A549 (cell line): ENCODE measurements at regions of chr9 and their contacts with region 1.

Region 1: DNA sequence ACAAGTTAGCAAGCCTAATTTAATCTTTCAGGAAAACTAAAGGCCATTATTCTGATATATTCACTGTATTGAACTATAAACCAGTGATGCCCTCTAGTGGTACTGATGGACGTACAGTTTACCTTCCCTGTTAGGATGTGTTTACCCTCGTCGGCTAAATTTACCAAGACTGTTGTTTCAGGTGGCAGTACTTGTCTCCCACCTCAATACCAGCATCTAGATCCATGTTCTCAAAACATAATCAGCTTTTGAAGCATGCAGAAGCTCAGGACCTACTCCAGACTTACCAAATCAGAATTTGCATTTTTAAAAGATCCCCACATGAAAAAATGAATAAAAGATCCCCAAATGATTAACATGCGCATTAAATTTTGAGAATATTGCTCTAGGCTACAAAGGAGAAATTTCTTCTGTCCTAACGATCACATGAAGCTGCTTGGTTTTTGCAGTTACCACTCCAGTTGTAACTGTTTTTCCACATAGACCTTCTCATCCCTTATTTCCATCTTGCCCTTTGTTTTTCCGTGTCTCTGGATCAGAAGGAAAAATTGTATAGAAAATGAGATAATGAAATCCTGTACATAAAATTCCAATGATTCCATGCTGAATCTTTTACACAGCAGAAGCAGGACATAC is 3.2 kb upstream of the BAAT start:
- DNase-seq: peak in 1 of 2 experiments; percentile 82
- ATAC-seq: peak; percentile 98 to 99
- H3K4me3 ChIP-seq: no peak overlapping the region
- H3K27ac ChIP-seq: peak overlapping the region; percentile 68 to 82
- H3K4me1 ChIP-seq: peaks cover 44% of the 10 kb centered on the region
- CTCF ChIP-seq: peak; percentile 74
- EP300 ChIP-seq: no peak
- POLR2A ChIP-seq: no peak
- RAD21 ChIP-seq: peak; percentile 84

Region 2: DNA sequence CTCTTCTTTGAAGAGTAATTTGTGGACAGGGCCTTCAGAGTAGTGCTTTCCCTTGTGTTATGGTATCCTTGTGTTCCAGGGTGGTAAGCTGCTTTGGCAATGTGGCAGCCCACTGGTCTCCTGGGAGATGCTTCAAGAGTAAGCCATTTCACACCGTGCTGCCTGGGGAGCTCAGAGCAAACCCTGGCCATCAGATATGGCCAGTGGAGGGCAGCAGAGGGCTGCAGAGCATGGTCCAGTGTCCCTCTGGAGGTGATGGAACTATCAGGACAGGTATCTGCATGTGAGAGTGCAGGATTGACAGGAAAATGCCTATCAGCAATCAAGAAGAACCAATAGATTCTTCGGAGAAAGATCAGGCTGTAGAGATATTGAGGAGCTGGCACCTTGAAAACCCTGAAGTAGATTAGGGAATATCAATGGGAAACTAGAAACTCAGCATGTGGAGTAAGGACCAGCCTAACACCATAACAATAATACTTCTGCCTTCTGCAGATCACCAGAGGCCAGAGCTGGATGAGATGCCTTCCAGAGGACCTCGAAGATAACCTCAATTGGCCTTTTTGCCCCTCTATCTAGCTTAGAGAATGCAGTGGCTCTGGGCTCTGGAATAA is 268.7 kb before region 1 on chr9:
- CTCF ChIA-PET with region 1: interaction called, 14 read pairs
- POLR2A ChIA-PET with region 1: no interaction called
- DNase-seq: peak; percentile 33 to 58
- ATAC-seq: peak; percentile 99 to 100
- H3K4me3 ChIP-seq: no peak overlapping the region
- H3K27ac ChIP-seq: no peak overlapping the region
- H3K4me1 ChIP-seq: no peaks in the 10 kb centered on the region
- CTCF ChIP-seq: peak; percentile 81
- EP300 ChIP-seq: no peak
- POLR2A ChIP-seq: no peak
- RAD21 ChIP-seq: peak; percentile 87 to 88

Region 3: DNA sequence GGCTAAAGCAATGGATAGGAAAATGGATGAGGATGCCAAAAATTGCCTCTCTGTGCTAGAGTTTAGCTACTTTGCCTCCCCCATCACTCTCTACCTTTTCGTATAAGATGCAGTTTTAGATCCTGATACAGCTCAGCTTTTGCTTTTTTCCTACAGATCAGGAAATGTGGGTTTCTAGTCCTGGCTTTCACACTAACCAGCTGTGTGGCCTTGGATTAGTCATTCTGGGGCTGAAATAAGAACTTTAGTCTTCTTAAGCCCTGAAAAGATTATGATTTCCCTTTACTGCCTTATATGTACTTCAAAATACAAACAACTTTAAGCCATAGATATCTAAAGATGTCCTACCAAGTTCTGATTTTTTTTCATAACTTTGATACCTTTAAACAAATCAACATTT is 119.6 kb before region 1 on chr9:
- CTCF ChIA-PET with region 1: no interaction called
- POLR2A ChIA-PET with region 1: no interaction called
- DNase-seq: no peak
- ATAC-seq: no peak
- H3K4me3 ChIP-seq: no peak overlapping the region
- H3K27ac ChIP-seq: no peak overlapping the region
- H3K4me1 ChIP-seq: 0 out of 3 replicates have a peak, but pooled peaks cover 5% of the 10 kb centered on the region
- CTCF ChIP-seq: no peak
- EP300 ChIP-seq: no peak
- POLR2A ChIP-seq: no peak
- RAD21 ChIP-seq: no peak

Region 4: DNA sequence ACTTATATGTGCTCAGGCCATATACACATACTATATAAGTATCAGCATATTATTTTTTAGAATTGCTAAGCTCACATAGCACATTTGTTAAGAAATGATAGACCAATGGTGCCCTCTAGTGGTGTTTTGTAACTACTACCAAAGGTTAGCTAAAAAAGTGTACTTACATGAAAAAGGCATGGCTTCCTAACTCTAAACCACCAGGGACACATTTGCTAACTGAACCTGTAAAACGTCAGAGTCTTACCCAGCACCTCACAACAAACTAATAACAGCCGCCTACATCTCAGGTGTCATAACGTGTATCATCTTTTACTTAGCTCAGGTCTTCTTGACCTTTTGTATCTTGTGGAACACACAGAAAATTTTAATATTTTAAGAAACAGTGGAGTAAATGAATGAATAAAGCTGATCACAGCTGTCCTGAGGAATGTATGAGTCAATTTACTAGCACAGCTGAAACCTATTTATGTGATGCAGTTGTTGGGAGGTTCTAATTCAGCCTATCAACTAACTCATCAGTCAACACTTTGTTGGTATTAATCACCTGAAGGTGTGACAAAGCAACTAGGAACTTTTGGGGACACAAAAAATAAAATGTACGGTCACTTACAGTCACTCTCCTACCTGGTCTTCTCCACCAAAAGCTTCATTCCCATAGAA is 76.1 kb before region 1 on chr9:
- CTCF ChIA-PET with region 1: interaction called, 43 read pairs
- POLR2A ChIA-PET with region 1: no interaction called
- DNase-seq: peak; percentile 55 to 89
- ATAC-seq: peak; percentile 72 to 83; a peak in 4 of 6 replicates
- H3K4me3 ChIP-seq: no peak overlapping the region
- H3K27ac ChIP-seq: peak overlapping the region; percentile 78 to 82
- H3K4me1 ChIP-seq: peaks cover 40% of the 10 kb centered on the region
- CTCF ChIP-seq: peak; percentile 82
- EP300 ChIP-seq: no peak
- POLR2A ChIP-seq: no peak
- RAD21 ChIP-seq: peak; percentile 84 to 90

Region 5: GRCh38 chr9:101326501-101326900 is 61.5 kb before region 1 on chr9:
- CTCF ChIA-PET with region 1: interaction called, 30 read pairs
- POLR2A ChIA-PET with region 1: no interaction called
- DNase-seq: peak in 1 of 2 experiments; percentile 73
- ATAC-seq: peak; percentile 59 to 63; a peak in 5 of 6 replicates
- H3K4me3 ChIP-seq: 0 out of 3 replicates have a peak overlapping the region, but pooled peaks have one; percentile 5
- H3K27ac ChIP-seq: peak overlapping the region; percentile 92
- H3K4me1 ChIP-seq: peaks cover 51% of the 10 kb centered on the region
- CTCF ChIP-seq: no peak
- EP300 ChIP-seq: peak; percentile 85; a peak in 4 of 5 replicates
- POLR2A ChIP-seq: no peak
- RAD21 ChIP-seq: peak in 1 of 2 experiments; percentile 49; a peak in 2 of 5 replicates

Region 6: GRCh38 chr9:101369286-101369685 is 18.7 kb before region 1 on chr9:
- CTCF ChIA-PET with region 1: interaction called, 30 read pairs
- POLR2A ChIA-PET with region 1: interaction called, 4 read pairs
- DNase-seq: peak; percentile 18 to 21
- ATAC-seq: peak in 1 of 2 experiments; percentile 62; a peak in 3 of 6 replicates
- H3K4me3 ChIP-seq: no peak overlapping the region
- H3K27ac ChIP-seq: peak overlapping the region; percentile 75 to 95
- H3K4me1 ChIP-seq: peaks cover 78% of the 10 kb centered on the region
- CTCF ChIP-seq: no peak
- EP300 ChIP-seq: no peak
- POLR2A ChIP-seq: no peak
- RAD21 ChIP-seq: no peak

Region 7: GRCh38 chr9:101376111-101376848 is 11.7 kb before region 1 on chr9:
- CTCF ChIA-PET with region 1: interaction called, 30 read pairs
- POLR2A ChIA-PET with region 1: no interaction called
- DNase-seq: peak; percentile 61 to 62
- ATAC-seq: peak; percentile 94 to 99
- H3K4me3 ChIP-seq: no peak overlapping the region
- H3K27ac ChIP-seq: peak overlapping the region; percentile 69 to 90
- H3K4me1 ChIP-seq: peaks cover 52% of the 10 kb centered on the region
- CTCF ChIP-seq: no peak
- EP300 ChIP-seq: no peak
- POLR2A ChIP-seq: no peak
- RAD21 ChIP-seq: no peak

Region 8: GRCh38 chr9:101398068-101398929 is 10.3 kb after region 1 on chr9 and contains the starts of genes MRPL50 and ZNF189:
- CTCF ChIA-PET with region 1: interaction called, 17 read pairs
- POLR2A ChIA-PET with region 1: interaction called, 8 read pairs
- DNase-seq: peak; percentile 96 to 98
- ATAC-seq: peak; percentile 99
- H3K4me3 ChIP-seq: peak within 1 kb of the TSS; percentile 56
- H3K27ac ChIP-seq: peak within 1 kb of the TSS; percentile 89 to 95
- H3K4me1 ChIP-seq: peaks cover 10% of the 10 kb centered on the region; the same call in 1 of the 3 replicates
- CTCF ChIP-seq: no peak
- EP300 ChIP-seq: no peak
- POLR2A ChIP-seq: peak; percentile 74
- RAD21 ChIP-seq: no peak
- polyA plus RNA-seq, gene MRPL50: 37.6 and 42.5 TPM in 2 replicates
- polyA plus RNA-seq, gene ZNF189: 13.9 and 14.0 TPM in 2 replicates

Region 9: GRCh38 chr9:101438523-101438922 is 50.5 kb after region 1 on chr9:
- CTCF ChIA-PET with region 1: no interaction called
- POLR2A ChIA-PET with region 1: no interaction called
- DNase-seq: no peak
- ATAC-seq: no peak
- H3K4me3 ChIP-seq: no peak overlapping the region
- H3K27ac ChIP-seq: no peak overlapping the region
- H3K4me1 ChIP-seq: no peaks in the 10 kb centered on the region
- CTCF ChIP-seq: no peak
- EP300 ChIP-seq: no peak
- POLR2A ChIP-seq: no peak
- RAD21 ChIP-seq: no peak